Activated CD4-positive, alpha-beta memory T cell treated with anti-CD3 and anti-CD28 coated beads for 36 hours (primary cell): ENCODE measurements at regions of chr18 and their contacts with region 1.

Region 1: DNA sequence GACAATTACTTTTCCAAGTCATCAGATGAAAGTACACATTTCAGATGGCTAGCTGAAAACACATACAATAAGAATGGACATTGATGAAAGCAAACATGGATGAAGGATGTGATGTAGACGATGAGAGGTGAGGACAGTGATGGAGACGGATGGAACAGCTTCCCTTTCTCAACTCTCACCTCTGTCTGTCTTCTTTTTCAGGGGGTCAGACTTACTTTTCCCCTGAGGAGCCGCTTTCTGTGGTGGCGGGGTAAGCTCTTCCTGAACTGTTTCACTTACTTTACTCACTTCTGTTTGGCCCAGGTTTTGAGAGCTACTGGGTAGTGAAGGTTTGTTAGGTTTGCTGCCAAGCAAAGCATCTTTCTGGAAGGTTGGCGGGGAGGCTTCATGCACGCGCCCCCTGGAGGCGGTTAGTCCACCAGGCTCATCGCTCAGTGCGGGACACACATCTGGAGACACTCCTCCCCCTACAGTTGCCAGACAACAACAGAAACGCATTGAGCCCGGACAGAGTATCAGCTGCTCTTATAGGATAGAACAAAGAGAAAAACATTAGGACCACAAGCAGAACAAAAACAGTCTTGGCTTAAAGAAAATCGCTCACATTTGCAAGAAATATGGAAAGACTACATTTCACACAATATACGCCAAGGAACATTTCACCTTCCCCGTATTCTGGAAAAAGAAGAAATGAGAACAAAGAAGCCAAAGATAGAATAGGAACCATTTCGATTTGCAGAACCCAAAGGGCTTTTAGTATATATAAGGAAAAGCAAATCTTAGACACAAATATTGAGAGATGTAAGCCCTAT is 90.5 kb downstream of the MYOM1 start:
- DNase-seq: peak; percentile 90
- H3K4me3 Mint-ChIP-seq: no peak overlapping the region
- H3K27ac Mint-ChIP-seq: no peak overlapping the region
- H3K4me1 Mint-ChIP-seq: peaks cover 13% of the 10 kb centered on the region
- H3K27me3 Mint-ChIP-seq: no peaks in the 10 kb centered on the region

Region 2: GRCh38 chr18:2932247-2933181 is 196.7 kb before region 1 on chr18:
- CTCF ChIA-PET with region 1: interaction called, 71 read pairs
- POLR2A ChIA-PET with region 1: no interaction called
- intact Hi-C with region 1: no loop called
- DNase-seq: no peak
- H3K4me3 Mint-ChIP-seq: peak overlapping the region; percentile 18
- H3K27ac Mint-ChIP-seq: peak overlapping the region; percentile 89
- H3K4me1 Mint-ChIP-seq: peaks cover 45% of the 10 kb centered on the region
- H3K27me3 Mint-ChIP-seq: no peaks in the 10 kb centered on the region

Region 3: GRCh38 chr18:2985628-2986027 is 143.6 kb before region 1 on chr18:
- CTCF ChIA-PET with region 1: interaction called, 18 read pairs
- POLR2A ChIA-PET with region 1: no interaction called
- intact Hi-C with region 1: no loop called
- DNase-seq: no peak
- H3K4me3 Mint-ChIP-seq: no peak overlapping the region
- H3K27ac Mint-ChIP-seq: peak overlapping the region; percentile 58
- H3K4me1 Mint-ChIP-seq: peaks cover 74% of the 10 kb centered on the region
- H3K27me3 Mint-ChIP-seq: no peaks in the 10 kb centered on the region

Region 4: GRCh38 chr18:3117493-3118192 is 11.6 kb before region 1 on chr18:
- CTCF ChIA-PET with region 1: interaction called, 20 read pairs
- POLR2A ChIA-PET with region 1: no interaction called
- intact Hi-C with region 1: no loop called
- DNase-seq: no peak
- H3K4me3 Mint-ChIP-seq: no peak overlapping the region
- H3K27ac Mint-ChIP-seq: no peak overlapping the region
- H3K4me1 Mint-ChIP-seq: no peaks in the 10 kb centered on the region
- H3K27me3 Mint-ChIP-seq: no peaks in the 10 kb centered on the region

Region 5: DNA sequence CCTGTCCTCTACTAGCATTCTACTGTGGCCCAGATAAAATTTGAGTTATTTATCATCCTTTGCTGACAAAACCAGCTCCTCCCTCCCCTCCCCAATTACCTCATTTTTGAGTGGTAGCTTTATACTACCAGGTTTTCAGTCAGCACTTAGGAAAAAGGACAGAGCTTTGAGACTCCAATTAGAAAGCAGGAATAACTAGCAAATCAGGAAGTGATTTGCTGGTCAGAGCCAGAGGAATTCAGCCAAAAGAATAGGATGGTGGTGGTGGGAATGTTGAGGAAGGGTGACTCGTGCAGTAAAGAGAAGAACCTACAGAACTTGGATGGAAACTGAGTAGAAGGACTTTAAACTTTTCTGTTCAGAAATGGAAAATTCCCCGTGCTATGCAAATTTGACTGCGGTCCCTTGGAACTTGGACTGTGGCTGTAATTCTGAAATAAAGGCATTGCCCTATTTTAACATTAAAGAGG is 136.3 kb after region 1 on chr18:
- CTCF ChIA-PET with region 1: no interaction called
- POLR2A ChIA-PET with region 1: no interaction called
- intact Hi-C with region 1: no loop called
- DNase-seq: no peak
- H3K4me3 Mint-ChIP-seq: peak overlapping the region; percentile 6
- H3K27ac Mint-ChIP-seq: peak overlapping the region; percentile 72
- H3K4me1 Mint-ChIP-seq: peaks cover 69% of the 10 kb centered on the region
- H3K27me3 Mint-ChIP-seq: no peaks in the 10 kb centered on the region

Region 6: DNA sequence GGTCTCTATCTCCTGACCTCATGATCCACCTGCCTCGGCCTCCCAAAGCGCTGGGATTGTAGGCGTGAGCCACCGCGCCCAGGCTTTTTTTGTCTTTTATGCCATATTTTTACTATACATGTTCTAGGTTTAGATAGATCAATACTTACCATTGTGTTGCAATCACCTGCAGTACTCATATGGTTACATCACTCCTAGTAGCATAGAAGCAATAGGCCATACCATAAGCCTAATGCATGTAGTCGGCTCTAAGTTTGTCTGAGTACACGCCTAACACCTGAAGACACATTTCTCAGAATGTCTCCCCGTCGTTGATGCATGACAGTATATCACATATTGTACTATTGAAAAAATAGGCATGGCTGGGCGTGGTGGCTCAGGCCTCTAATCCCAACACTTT is 293.6 kb after region 1 on chr18:
- CTCF ChIA-PET with region 1: no interaction called
- POLR2A ChIA-PET with region 1: no interaction called
- intact Hi-C with region 1: no loop called
- DNase-seq: no peak
- H3K4me3 Mint-ChIP-seq: no peak overlapping the region
- H3K27ac Mint-ChIP-seq: no peak overlapping the region
- H3K4me1 Mint-ChIP-seq: no peaks in the 10 kb centered on the region
- H3K27me3 Mint-ChIP-seq: no peaks in the 10 kb centered on the region

Region 7: DNA sequence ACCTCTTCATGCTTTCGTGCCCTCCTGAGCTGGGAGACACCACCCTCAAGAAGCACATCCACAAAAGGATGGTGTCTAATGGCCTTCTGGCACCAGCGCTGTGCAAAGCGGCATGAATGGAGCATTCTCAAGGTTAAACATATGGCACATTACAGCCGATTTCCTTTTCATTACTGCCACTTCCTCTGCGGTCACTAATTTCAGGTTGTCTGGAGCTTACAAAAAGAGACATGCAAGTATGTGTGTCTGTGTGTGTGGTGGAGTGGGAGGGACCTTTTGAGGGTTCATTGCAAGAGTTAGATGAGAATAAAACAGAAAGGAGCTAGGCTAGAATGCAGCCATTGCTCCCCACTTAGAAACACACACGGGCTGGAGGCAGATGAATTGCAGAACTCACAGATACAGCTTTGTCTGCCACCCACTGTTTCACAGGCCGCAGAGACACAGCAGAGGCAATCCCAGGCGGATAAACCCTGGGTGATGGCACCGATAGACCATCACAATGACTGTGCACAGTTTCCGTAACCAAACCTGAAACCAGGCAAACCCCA is 396.7 kb after region 1 on chr18:
- CTCF ChIA-PET with region 1: no interaction called
- POLR2A ChIA-PET with region 1: no interaction called
- intact Hi-C with region 1: no loop called
- DNase-seq: peak; percentile 71
- H3K4me3 Mint-ChIP-seq: peak overlapping the region; percentile 11
- H3K27ac Mint-ChIP-seq: peak overlapping the region; percentile 8
- H3K4me1 Mint-ChIP-seq: peaks cover 17% of the 10 kb centered on the region
- H3K27me3 Mint-ChIP-seq: no peaks in the 10 kb centered on the region